ENCODE measurements at regions of chr2 and their contacts with region 1.

Region 1: DNA sequence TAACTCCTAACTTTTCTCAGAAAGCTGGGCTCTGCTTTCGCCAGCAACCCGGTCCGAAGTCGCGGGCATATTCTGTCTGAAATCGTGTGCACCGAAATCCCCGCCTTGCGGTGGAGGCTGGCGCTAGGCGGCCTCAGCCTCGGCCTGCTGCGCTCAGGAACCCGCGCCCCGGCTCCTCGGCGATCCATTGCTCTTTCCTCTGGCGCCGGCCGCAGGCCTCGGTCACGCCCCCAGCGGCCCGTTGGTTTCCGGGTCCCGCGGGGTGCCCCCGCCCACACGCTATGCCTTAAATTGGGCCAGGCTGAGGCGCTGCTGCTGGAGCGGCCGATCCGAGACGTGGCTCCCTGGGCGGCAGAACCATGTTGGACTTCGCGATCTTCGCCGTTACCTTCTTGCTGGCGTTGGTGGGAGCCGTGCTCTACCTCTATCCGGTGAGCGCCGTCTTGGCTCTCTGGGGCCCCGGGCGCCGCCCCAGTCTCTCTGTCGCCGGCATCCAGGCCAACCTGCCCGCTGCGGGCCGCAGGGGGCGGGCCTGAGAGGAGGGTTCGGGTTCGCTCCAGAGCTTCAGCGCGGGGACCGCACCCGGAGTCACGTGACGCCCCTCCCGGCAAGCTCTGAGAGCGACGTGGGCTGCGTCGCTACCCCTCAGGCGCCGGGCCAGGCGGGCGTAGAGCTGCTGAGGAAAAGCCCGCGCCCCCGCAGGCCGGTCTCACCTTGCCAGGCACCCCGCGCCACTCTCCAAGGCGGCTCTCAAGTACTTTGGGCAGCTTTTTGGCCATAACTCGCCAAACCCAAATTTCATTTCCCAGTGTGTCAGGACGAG is at the start of gene CYP20A1:
- DNase-seq: peak; percentile 97
- H3K4me3 Mint-ChIP-seq: peak within 1 kb of the TSS; percentile 94
- H3K27ac Mint-ChIP-seq: peak within 1 kb of the TSS; percentile 98
- H3K4me1 Mint-ChIP-seq: peaks cover 26% of the 10 kb centered on the region
- H3K27me3 Mint-ChIP-seq: no peaks in the 10 kb centered on the region
- total RNA-seq, gene CYP20A1: 23.1 and 26.0 TPM in 2 replicates

Region 2: DNA sequence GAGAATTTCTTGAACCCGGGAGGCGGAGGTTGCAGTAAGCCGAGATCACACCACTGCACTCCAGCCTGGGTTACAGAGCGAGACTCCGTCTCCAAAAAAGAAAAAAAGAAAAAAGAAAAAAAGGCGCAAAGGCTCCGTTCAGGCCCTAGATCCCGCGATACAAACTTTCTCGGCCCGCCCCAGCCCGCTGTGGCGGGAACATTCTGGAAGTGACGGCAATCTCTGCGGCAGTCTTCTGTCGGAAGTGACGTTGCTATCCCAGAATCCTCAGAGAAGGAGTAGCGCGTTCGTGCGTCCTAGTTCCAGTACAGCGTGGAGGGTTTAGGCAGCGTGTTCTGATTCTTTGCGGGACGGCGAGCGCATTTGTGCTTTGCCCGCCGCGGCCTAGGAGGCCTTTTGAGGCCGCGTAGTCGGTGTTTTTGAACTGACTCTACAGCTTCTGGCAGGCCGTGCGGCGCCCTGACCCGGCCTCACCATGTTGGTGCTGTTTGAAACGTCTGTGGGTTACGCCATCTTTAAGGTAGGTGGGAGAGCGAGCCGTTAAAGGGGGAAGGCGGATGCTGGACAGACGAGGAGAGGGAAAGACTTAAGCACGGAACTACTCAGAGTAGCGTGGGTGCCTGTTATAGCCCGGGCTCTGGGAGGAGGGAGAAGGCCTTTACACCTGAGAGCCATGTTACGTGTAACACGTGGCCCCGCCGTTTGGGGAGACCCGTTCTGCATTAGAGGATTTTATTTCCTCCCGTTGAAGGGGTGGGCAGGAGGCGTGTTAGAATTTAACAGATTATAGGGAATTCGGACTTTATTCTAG is 973.2 kb before region 1 on chr2 and contains the start of gene NOP58:
- intact Hi-C with region 1: loop called (anchors 5 kb)
- DNase-seq: peak; percentile 91
- H3K4me3 Mint-ChIP-seq: peak within 1 kb of the TSS; percentile 55
- H3K27ac Mint-ChIP-seq: peak within 1 kb of the TSS; percentile 45
- H3K4me1 Mint-ChIP-seq: peaks cover 19% of the 10 kb centered on the region
- H3K27me3 Mint-ChIP-seq: no peaks in the 10 kb centered on the region
- total RNA-seq, gene NOP58: 227 and 241 TPM in 2 replicates

Region 3: DNA sequence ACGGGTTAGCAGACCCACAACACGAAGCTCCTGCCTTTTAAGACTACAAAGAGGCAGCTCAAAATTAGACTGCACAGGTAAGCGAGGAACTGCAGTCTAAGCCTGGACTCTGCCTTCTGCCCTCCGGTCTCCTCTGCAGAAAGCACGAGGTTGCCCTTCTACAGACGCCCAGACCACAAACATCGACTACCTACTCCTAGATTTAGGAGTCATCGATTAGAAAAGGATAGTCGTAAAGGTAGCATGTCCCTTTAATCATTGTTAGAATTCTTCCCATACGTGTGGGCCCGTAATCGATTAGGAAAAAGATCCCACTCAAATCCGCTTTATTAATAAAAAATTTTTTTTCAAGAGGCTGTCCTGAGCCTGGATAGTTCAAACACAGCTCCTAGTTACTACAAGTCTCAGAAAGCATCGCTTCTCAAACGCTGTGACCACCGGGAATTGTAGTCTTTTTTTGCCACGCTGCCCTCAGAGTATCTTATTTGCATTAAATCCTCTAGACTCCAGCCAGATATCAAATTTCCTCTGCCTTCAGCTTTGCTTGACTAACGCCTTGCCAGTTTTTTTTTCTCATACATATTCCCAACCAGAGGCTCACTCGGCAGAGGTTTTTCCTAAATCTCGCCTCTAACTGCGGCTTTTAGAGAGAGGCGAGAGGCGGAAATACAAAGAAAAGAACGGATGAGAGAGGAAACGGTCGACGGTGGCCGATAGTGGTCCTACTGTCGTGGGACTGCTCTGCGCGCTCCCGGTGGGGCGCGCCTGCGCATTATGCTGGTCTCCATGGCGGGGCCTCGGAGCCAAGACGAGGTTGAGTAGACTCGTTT is 327.2 kb before region 1 on chr2 and contains the starts of genes CARF and WDR12:
- intact Hi-C with region 1: loop called (anchors 1 kb)
- DNase-seq: peak; percentile 87
- H3K4me3 Mint-ChIP-seq: peak within 1 kb of the TSS; percentile 96
- H3K27ac Mint-ChIP-seq: peak within 1 kb of the TSS; percentile 98
- H3K4me1 Mint-ChIP-seq: peaks cover 31% of the 10 kb centered on the region
- H3K27me3 Mint-ChIP-seq: no peaks in the 10 kb centered on the region
- total RNA-seq, gene CARF: 3.6 and 4.3 TPM in 2 replicates
- total RNA-seq, gene WDR12: 149 and 165 TPM in 2 replicates

Region 4: DNA sequence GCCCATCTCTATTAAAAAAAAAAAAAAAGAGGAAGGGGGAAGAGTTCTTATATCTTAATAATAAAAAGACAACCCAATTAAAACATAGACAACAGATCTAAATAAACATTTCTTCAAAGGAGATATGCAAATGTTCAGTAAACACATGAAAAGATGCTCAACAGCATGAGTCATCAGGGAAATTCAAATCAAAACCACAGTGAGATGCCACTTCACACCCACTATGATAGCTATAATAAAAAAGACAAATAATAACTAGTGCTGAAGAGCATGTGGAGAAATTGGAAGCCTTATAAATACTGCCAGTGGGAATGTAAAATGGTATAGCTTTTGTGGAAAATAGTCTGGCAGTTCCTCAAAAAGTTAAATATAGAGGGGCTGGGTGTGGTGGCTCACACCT is 61.6 kb before region 1 on chr2:
- intact Hi-C with region 1: loop called (anchors 2 kb)
- DNase-seq: no peak
- H3K4me3 Mint-ChIP-seq: no peak overlapping the region
- H3K27ac Mint-ChIP-seq: no peak overlapping the region
- H3K4me1 Mint-ChIP-seq: peaks cover 5% of the 10 kb centered on the region
- H3K27me3 Mint-ChIP-seq: no peaks in the 10 kb centered on the region

Region 5: GRCh38 chr2:203225423-203226039 is 13.4 kb before region 1 on chr2:
- intact Hi-C with region 1: loop called (anchors 1 kb)
- DNase-seq: no peak
- H3K4me3 Mint-ChIP-seq: no peak overlapping the region
- H3K27ac Mint-ChIP-seq: no peak overlapping the region
- H3K4me1 Mint-ChIP-seq: no peaks in the 10 kb centered on the region
- H3K27me3 Mint-ChIP-seq: peaks cover 2% of the 10 kb centered on the region

Region 6: GRCh38 chr2:203310688-203311448 is 72.0 kb after region 1 on chr2:
- intact Hi-C with region 1: no loop called
- DNase-seq: no peak
- H3K4me3 Mint-ChIP-seq: no peak overlapping the region
- H3K27ac Mint-ChIP-seq: no peak overlapping the region
- H3K4me1 Mint-ChIP-seq: peaks cover 5% of the 10 kb centered on the region
- H3K27me3 Mint-ChIP-seq: no peaks in the 10 kb centered on the region

Region 7: GRCh38 chr2:203327901-203328759 is 89.2 kb after region 1 on chr2 and contains the start of gene ABI2:
- intact Hi-C with region 1: loop called (anchors 1 kb)
- DNase-seq: peak; percentile 60
- H3K4me3 Mint-ChIP-seq: peak within 1 kb of the TSS; percentile 94
- H3K27ac Mint-ChIP-seq: peak within 1 kb of the TSS; percentile 91
- H3K4me1 Mint-ChIP-seq: peaks cover 34% of the 10 kb centered on the region
- H3K27me3 Mint-ChIP-seq: no peaks in the 10 kb centered on the region
- total RNA-seq, gene ABI2: 31.4 and 32.3 TPM in 2 replicates

Region 8: GRCh38 chr2:203650860-203651613 is 412.1 kb after region 1 on chr2:
- intact Hi-C with region 1: loop called (anchors 10 kb)
- DNase-seq: no peak
- H3K4me3 Mint-ChIP-seq: no peak overlapping the region
- H3K27ac Mint-ChIP-seq: no peak overlapping the region
- H3K4me1 Mint-ChIP-seq: peaks cover 36% of the 10 kb centered on the region
- H3K27me3 Mint-ChIP-seq: peaks cover 5% of the 10 kb centered on the region

Region 9: DNA sequence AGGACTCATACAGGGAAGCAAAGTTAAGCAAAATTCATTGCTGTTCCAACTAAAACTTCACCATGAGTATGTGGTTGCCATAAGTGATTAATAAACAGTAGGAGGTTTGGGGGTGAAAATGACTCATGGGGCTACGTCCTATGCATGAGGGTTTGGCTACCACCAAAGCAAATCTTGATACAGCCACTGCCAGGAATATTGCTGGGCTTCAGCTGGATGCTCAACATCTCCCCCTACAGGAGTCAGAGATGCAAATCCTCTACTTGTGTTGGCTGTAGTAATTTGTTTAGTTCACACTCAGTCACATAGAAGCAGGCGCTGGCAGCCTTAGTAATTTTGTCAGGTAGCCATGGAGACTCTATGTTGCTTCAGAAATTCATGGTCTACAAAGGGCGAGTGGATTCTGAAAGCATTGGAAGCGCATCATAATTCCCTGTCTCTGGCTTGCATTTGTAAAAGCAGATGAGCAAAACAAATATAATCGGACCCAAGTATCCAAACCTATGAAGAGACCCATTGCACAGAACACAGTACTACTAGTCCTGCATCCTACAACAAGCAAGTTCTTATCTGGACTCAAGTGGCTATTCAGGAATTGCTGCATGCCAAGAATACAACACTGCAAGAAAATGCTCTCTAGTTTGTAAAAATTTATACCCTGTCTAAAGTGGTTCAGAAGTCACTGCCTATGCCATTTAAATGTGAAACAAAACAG is 543.5 kb after region 1 on chr2:
- intact Hi-C with region 1: no loop called
- DNase-seq: peak; percentile 50
- H3K4me3 Mint-ChIP-seq: no peak overlapping the region
- H3K27ac Mint-ChIP-seq: peak overlapping the region; percentile 92
- H3K4me1 Mint-ChIP-seq: peaks cover 63% of the 10 kb centered on the region
- H3K27me3 Mint-ChIP-seq: no peaks in the 10 kb centered on the region